GM18951 (cell line): ENCODE measurements at regions of chrX and their contacts with region 1.

Region 1: DNA sequence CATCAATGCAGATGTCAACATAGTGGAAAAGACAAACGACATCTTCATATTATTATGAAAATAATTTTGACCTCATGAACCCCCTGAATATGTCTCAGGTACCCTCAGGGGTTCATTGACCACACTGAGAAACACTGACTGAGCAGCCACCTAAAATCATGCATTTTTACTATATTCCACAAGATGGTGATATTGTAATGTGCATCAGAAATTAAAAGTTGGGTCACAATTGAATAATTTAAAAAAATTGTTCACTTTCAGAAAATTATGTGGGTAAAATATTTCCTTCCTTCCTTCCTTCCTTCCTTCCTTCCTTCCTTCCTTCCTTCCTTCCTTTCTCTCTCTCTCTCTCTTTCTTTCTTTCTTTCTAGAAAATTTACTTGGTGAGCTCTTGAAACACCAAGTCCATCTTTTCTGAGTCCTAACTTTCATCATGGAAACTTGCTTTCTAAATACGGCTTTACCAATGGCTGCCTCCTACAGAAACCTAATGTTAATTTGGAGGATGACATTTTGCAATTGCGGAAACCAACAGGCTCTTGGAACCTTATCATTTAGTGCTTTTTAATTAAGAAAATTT is 103.6 kb downstream of the RTL3 start:
- POLR2A ChIP-seq: no peak

Region 2: GRCh38 chrX:78747489-78747888 is 192.0 kb after region 1 on chrX and contains the start of gene LPAR4:
- in situ Hi-C with region 1: no loop called
- POLR2A ChIP-seq: no peak

Region 3: GRCh38 chrX:79081895-79082512 is 526.5 kb after region 1 on chrX:
- in situ Hi-C with region 1: loop called (anchors 25 kb)
- POLR2A ChIP-seq: no peak

Region 4: DNA sequence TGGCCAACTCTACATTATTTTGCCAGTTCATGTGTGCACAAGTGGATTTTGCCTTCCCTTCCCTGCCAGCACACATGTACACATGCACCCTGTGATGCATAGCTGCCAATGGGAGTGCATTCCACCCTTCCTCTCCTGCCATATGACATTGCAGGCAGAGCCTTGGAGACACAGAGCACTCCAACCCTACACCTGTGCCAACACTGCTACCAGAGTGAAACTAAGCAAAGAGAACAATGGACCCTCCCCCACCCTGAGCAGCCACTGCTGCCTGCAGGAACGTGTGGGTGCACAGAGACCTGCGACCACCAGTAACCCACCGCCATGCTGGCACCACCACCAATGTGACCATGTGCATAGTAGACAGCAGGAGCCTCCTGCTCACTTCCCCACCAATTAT is 733.2 kb after region 1 on chrX:
- in situ Hi-C with region 1: loop called (anchors 25 kb)
- POLR2A ChIP-seq: no peak

Region 5: GRCh38 chrX:79412972-79413371 is 857.5 kb after region 1 on chrX:
- in situ Hi-C with region 1: loop called (anchors 25 kb)
- POLR2A ChIP-seq: no peak